MCF 10A (cell line): ENCODE measurements at regions of chr10 and their contacts with region 1.

Region 1: GRCh38 chr10:23314835-23315239 is 29.8 kb downstream of the C10orf67 start:
- DNase-seq: peak; percentile 90
- H3K4me3 Mint-ChIP-seq: no peak overlapping the region
- H3K27ac Mint-ChIP-seq: no peak overlapping the region
- H3K4me1 Mint-ChIP-seq: no peaks in the 10 kb centered on the region
- H3K27me3 Mint-ChIP-seq: no peaks in the 10 kb centered on the region
- CTCF ChIP-seq: peak; percentile 67

Region 2: GRCh38 chr10:22816298-22816653 is 498.6 kb before region 1 on chr10:
- CTCF ChIA-PET with region 1: no interaction called
- POLR2A ChIA-PET with region 1: no interaction called
- intact Hi-C with region 1: no loop called
- DNase-seq: peak; percentile 92
- H3K4me3 Mint-ChIP-seq: peak overlapping the region; percentile 38
- H3K27ac Mint-ChIP-seq: peak overlapping the region; percentile 97
- H3K4me1 Mint-ChIP-seq: peaks cover 16% of the 10 kb centered on the region
- H3K27me3 Mint-ChIP-seq: no peaks in the 10 kb centered on the region
- CTCF ChIP-seq: no peak

Region 3: GRCh38 chr10:23158370-23158769 is 156.5 kb before region 1 on chr10:
- CTCF ChIA-PET with region 1: interaction called, 14 read pairs
- POLR2A ChIA-PET with region 1: no interaction called
- intact Hi-C with region 1: no loop called
- DNase-seq: peak; percentile 71
- H3K4me3 Mint-ChIP-seq: no peak overlapping the region
- H3K27ac Mint-ChIP-seq: no peak overlapping the region
- H3K4me1 Mint-ChIP-seq: peaks cover 17% of the 10 kb centered on the region
- H3K27me3 Mint-ChIP-seq: peaks cover 55% of the 10 kb centered on the region
- CTCF ChIP-seq: peak; percentile 73

Region 4: GRCh38 chr10:23217471-23217870 is 97.4 kb before region 1 on chr10:
- CTCF ChIA-PET with region 1: no interaction called
- POLR2A ChIA-PET with region 1: no interaction called
- intact Hi-C with region 1: no loop called
- DNase-seq: no peak
- H3K4me3 Mint-ChIP-seq: no peak overlapping the region
- H3K27ac Mint-ChIP-seq: no peak overlapping the region
- H3K4me1 Mint-ChIP-seq: no peaks in the 10 kb centered on the region
- H3K27me3 Mint-ChIP-seq: peaks cover 75% of the 10 kb centered on the region
- CTCF ChIP-seq: no peak

Region 5: DNA sequence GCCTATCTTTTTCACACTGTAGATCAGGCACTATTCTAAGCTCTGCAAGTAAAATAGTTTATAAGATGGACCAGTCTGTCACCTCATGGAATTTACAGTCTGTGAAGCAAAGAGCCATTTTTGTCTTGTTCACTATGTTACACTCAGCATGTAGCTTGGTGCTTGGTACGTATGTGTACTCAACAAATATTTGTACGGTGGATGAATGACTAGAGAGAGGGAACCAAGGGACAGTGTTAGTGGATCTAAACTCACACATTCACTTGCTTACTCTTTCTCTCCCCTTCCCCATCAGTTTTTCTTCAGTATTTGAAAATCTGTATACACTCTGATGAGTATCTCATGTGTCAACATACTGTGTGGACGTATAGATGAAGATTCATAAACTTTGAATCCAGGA is 76.8 kb before region 1 on chr10:
- CTCF ChIA-PET with region 1: no interaction called
- POLR2A ChIA-PET with region 1: no interaction called
- intact Hi-C with region 1: no loop called
- DNase-seq: no peak
- H3K4me3 Mint-ChIP-seq: no peak overlapping the region
- H3K27ac Mint-ChIP-seq: no peak overlapping the region
- H3K4me1 Mint-ChIP-seq: no peaks in the 10 kb centered on the region
- H3K27me3 Mint-ChIP-seq: peaks cover 32% of the 10 kb centered on the region
- CTCF ChIP-seq: no peak

Region 6: GRCh38 chr10:23325132-23325531 is 10.3 kb after region 1 on chr10:
- CTCF ChIA-PET with region 1: interaction called, 15 read pairs
- POLR2A ChIA-PET with region 1: no interaction called
- intact Hi-C with region 1: no loop called
- DNase-seq: peak; percentile 15
- H3K4me3 Mint-ChIP-seq: no peak overlapping the region
- H3K27ac Mint-ChIP-seq: no peak overlapping the region
- H3K4me1 Mint-ChIP-seq: no peaks in the 10 kb centered on the region
- H3K27me3 Mint-ChIP-seq: no peaks in the 10 kb centered on the region
- CTCF ChIP-seq: no peak

Region 7: GRCh38 chr10:23438550-23439441 is 124.0 kb after region 1 on chr10 and contains the start of gene OTUD1:
- CTCF ChIA-PET with region 1: interaction called, 9 read pairs
- POLR2A ChIA-PET with region 1: interaction called, 9 read pairs
- intact Hi-C with region 1: loop called (anchors 1 kb)
- DNase-seq: peak; percentile 93
- H3K4me3 Mint-ChIP-seq: peak within 1 kb of the TSS; percentile 83
- H3K27ac Mint-ChIP-seq: peak within 1 kb of the TSS; percentile 83
- H3K4me1 Mint-ChIP-seq: peaks cover 20% of the 10 kb centered on the region
- H3K27me3 Mint-ChIP-seq: no peaks in the 10 kb centered on the region
- CTCF ChIP-seq: no peak
- total RNA-seq, gene OTUD1: 12.1 and 14.9 TPM in 2 replicates

Region 8: GRCh38 chr10:23516530-23516929 is 201.7 kb after region 1 on chr10:
- CTCF ChIA-PET with region 1: interaction called, 32 read pairs
- POLR2A ChIA-PET with region 1: interaction called, 3 read pairs
- intact Hi-C with region 1: loop called (anchors 2 kb)
- DNase-seq: peak; percentile 43
- H3K4me3 Mint-ChIP-seq: no peak overlapping the region
- H3K27ac Mint-ChIP-seq: no peak overlapping the region
- H3K4me1 Mint-ChIP-seq: peaks cover 28% of the 10 kb centered on the region
- H3K27me3 Mint-ChIP-seq: peaks cover 15% of the 10 kb centered on the region
- CTCF ChIP-seq: peak; percentile 51

Region 9: GRCh38 chr10:23656735-23657134 is 341.9 kb after region 1 on chr10:
- CTCF ChIA-PET with region 1: interaction called, 30 read pairs
- POLR2A ChIA-PET with region 1: no interaction called
- intact Hi-C with region 1: loop called (anchors 1 kb)
- DNase-seq: peak; percentile 26
- H3K4me3 Mint-ChIP-seq: no peak overlapping the region
- H3K27ac Mint-ChIP-seq: no peak overlapping the region
- H3K4me1 Mint-ChIP-seq: no peaks in the 10 kb centered on the region
- H3K27me3 Mint-ChIP-seq: peaks cover 64% of the 10 kb centered on the region
- CTCF ChIP-seq: peak; percentile 60